Activated CD4-positive, alpha-beta T cell treated with anti-CD3 and anti-CD28 coated beads for 36 hours (primary cell): ENCODE measurements at regions of chr2 and their contacts with region 1.

Region 1: GRCh38 chr2:177618255-177619253 is 226.0 kb downstream of the AGPS start:
- DNase-seq: peak; percentile 95
- ATAC-seq: peak; percentile 95
- H3K4me3 Mint-ChIP-seq: peak overlapping the region; percentile 90
- H3K27ac Mint-ChIP-seq: peak overlapping the region; percentile 98
- H3K4me1 Mint-ChIP-seq: no peaks in the 10 kb centered on the region
- H3K27me3 Mint-ChIP-seq: no peaks in the 10 kb centered on the region

Region 2: DNA sequence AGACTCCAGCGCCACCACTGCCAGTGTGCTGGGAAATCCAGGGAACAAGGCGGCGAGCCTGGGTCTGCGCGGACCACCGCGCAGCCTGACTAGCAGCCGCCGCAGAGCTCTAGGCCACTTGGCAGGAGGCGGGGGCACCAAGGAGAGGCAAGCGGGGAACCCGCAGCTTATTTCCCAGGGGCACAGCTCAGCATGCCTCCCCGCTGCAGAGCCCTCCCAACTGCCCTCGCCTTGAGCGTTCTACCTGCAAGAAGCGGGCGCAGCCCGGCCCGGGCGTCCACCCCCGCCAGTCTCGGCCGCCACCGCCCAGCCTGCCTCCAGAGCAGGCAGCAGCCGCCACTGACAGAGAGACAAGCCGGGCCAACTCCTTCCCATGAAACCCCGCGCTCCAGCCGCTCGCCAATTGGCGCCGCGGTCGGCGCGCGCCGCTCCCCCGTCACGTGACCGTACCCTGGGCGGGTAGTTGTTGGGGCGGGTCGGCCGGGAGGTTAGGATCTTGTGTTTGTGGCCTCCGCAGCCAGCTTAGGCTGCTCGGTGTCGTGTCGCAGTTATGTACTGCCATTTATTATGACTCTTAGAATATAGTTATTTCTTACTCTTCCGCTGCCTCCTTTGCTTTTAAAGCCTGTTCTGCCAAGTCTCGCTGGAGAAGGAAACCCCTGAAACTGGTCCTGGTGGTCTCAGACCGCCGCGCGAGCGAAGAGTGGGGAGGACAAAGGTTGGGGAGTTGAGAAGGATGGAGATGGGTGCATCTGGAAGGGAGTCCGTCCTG is 1616.5 kb before region 1 on chr2 and contains the start of gene LNPK:
- CTCF ChIA-PET with region 1: no interaction called
- POLR2A ChIA-PET with region 1: no interaction called
- intact Hi-C with region 1: loop called in 1 of 2 experiments (anchors 5 kb)
- DNase-seq: peak; percentile 95
- ATAC-seq: peak; percentile 93
- H3K4me3 Mint-ChIP-seq: peak within 1 kb of the TSS; percentile 99
- H3K27ac Mint-ChIP-seq: peak within 1 kb of the TSS; percentile 95
- H3K4me1 Mint-ChIP-seq: peaks cover 19% of the 10 kb centered on the region
- H3K27me3 Mint-ChIP-seq: no peaks in the 10 kb centered on the region
- total RNA-seq, gene LNPK: 27.3 to 36.0 TPM

Region 3: GRCh38 chr2:177212106-177212890 is 406.3 kb before region 1 on chr2 and contains the start of gene HNRNPA3:
- CTCF ChIA-PET with region 1: no interaction called
- POLR2A ChIA-PET with region 1: no interaction called
- intact Hi-C with region 1: loop called in 1 of 2 experiments (anchors 1 kb)
- DNase-seq: peak; percentile 100
- ATAC-seq: peak; percentile 90
- H3K4me3 Mint-ChIP-seq: peak within 1 kb of the TSS; percentile 86
- H3K27ac Mint-ChIP-seq: peak within 1 kb of the TSS; percentile 99
- H3K4me1 Mint-ChIP-seq: peaks cover 42% of the 10 kb centered on the region
- H3K27me3 Mint-ChIP-seq: no peaks in the 10 kb centered on the region
- total RNA-seq, gene HNRNPA3: 200 to 290 TPM

Region 4: GRCh38 chr2:177552422-177553175 is 66.0 kb before region 1 on chr2:
- CTCF ChIA-PET with region 1: interaction called, 3 read pairs
- POLR2A ChIA-PET with region 1: no interaction called
- intact Hi-C with region 1: loop called (anchors 1 kb)
- DNase-seq: peak; percentile 92
- ATAC-seq: peak; percentile 96
- H3K4me3 Mint-ChIP-seq: peak overlapping the region; percentile 90
- H3K27ac Mint-ChIP-seq: peak overlapping the region; percentile 99
- H3K4me1 Mint-ChIP-seq: peaks cover 6% of the 10 kb centered on the region
- H3K27me3 Mint-ChIP-seq: no peaks in the 10 kb centered on the region